ENCODE measurements at regions of chr6 and their contacts with region 1.

Region 1: GRCh38 chr6:72206606-72207005 is 320.3 kb downstream of the RIMS1 start:
- DNase-seq: no peak
- H3K4me3 ChIP-seq: no peak overlapping the region
- H3K27ac ChIP-seq: no peak overlapping the region
- H3K4me1 ChIP-seq: no peaks in the 10 kb centered on the region
- CTCF ChIP-seq: no peak

Region 2: DNA sequence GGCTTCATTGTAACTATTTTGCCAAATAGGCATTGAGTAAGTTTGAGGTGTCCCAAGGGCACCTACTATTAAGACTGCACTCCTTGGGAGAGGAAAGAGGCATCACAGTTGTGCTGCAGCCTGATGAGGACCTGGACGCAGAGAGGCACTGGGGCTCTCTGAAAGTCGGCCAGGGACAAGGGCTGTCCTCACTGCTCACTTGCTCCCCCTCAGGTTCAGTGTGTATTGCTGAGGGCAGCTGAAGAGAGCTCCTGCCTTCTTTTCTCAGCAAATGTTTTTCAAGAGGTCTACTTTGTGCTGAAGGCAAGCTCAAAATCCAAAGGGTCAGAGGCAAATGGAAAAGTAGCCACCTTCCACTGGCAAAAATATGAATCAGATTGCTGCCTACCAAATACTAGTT is 11.5 kb after region 1 on chr6:
- CTCF ChIA-PET with region 1: no interaction called
- POLR2A ChIA-PET with region 1: no interaction called
- intact Hi-C with region 1: no loop called
- DNase-seq: peak; percentile 3
- H3K4me3 ChIP-seq: no peak overlapping the region
- H3K27ac ChIP-seq: no peak overlapping the region
- H3K4me1 ChIP-seq: no peaks in the 10 kb centered on the region
- CTCF ChIP-seq: 0 out of 2 replicates have a peak, but pooled peaks have one; percentile 23

Region 3: GRCh38 chr6:72464791-72465691 is 258.4 kb after region 1 on chr6:
- CTCF ChIA-PET with region 1: no interaction called
- POLR2A ChIA-PET with region 1: interaction called, 10 read pairs
- intact Hi-C with region 1: no loop called
- DNase-seq: no peak
- H3K4me3 ChIP-seq: no peak overlapping the region
- H3K27ac ChIP-seq: no peak overlapping the region
- H3K4me1 ChIP-seq: no peaks in the 10 kb centered on the region
- CTCF ChIP-seq: no peak